B cell (primary cell): ENCODE measurements at regions of chr9 and their contacts with region 1.

Region 1: GRCh38 chr9:128552153-128552743 is at the start of gene SPTAN1:
- DNase-seq: peak; percentile 97
- ATAC-seq: peak; percentile 88
- H3K4me3 ChIP-seq: peak within 1 kb of the TSS; percentile 74 to 90 (median 77)
- H3K4me3 Mint-ChIP-seq: no peak within 1 kb of the TSS
- H3K27ac ChIP-seq: peak within 1 kb of the TSS; percentile 80 to 90
- H3K27ac Mint-ChIP-seq: peak within 1 kb of the TSS; percentile 90
- H3K4me1 ChIP-seq: peaks cover 33 to 34% of the 10 kb centered on the region in 2 donors
- H3K4me1 Mint-ChIP-seq: peaks cover 17% of the 10 kb centered on the region
- H3K27me3 ChIP-seq: no peaks in the 10 kb centered on the region
- H3K27me3 Mint-ChIP-seq: no peaks in the 10 kb centered on the region
- CTCF ChIP-seq: no peak
- total RNA-seq, gene SPTAN1: 351 and 354 TPM in 2 replicates

Region 2: GRCh38 chr9:128191406-128192046 is 360.7 kb before region 1 on chr9 and contains the start of gene CIZ1:
- CTCF ChIA-PET with region 1: no interaction called
- POLR2A ChIA-PET with region 1: no interaction called
- intact Hi-C with region 1: loop called (anchors 10 kb)
- DNase-seq: peak; percentile 88
- ATAC-seq: peak; percentile 90
- H3K4me3 ChIP-seq: peak within 1 kb of the TSS; percentile 26 to 82 (median 73)
- H3K4me3 Mint-ChIP-seq: peak within 1 kb of the TSS; percentile 94
- H3K27ac ChIP-seq: peak within 1 kb of the TSS; percentile 44 to 76
- H3K27ac Mint-ChIP-seq: peak within 1 kb of the TSS; percentile 92
- H3K4me1 ChIP-seq: peaks cover 12 to 24% of the 10 kb centered on the region in 2 donors
- H3K4me1 Mint-ChIP-seq: peaks cover 29% of the 10 kb centered on the region
- H3K27me3 ChIP-seq: no peaks in the 10 kb centered on the region
- H3K27me3 Mint-ChIP-seq: no peaks in the 10 kb centered on the region
- CTCF ChIP-seq: peak; percentile 84
- total RNA-seq, gene CIZ1: 160 and 169 TPM in 2 replicates

Region 3: DNA sequence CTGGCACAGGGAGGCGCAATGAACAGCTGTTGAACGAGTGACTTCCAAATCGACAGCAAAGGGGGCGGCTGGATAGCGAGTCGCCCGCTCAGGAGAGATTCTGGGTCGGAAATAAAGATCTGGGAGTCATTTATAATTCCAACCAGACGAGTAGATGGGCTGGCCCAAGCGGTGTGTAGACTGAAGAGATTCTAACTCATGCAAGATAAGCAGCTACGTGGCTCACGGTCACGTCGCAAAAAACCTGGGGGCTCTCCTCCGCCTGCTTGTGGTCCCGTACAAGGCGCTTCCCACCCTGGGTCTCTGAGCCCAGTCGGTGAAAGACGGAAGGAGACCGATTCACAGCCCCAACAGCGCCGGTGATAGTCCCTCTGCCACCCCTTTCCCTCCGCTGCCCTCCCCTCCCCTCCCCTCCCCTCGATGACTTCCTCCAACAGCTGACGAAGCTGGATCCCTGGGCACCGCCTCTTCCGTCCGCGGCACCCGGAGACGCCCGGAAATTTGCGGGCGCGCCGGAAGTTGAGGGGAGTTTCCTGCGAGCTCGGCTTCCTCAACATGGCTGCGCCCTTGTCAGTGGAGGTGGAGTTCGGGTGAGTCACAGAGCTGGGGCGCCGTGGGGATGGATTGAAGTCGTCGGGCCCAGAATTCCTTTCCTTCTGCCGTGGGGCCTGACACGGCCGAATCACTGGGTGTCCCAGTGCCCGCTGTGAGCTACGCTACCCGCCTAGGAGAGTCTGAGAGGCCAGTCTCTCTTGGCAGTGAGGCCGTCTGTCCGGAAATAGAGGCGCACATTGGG is 181.2 kb before region 1 on chr9 and contains the start of gene URM1:
- CTCF ChIA-PET with region 1: interaction called, 3 read pairs
- POLR2A ChIA-PET with region 1: no interaction called
- intact Hi-C with region 1: loop called (anchors 1 kb)
- DNase-seq: peak; percentile 96
- ATAC-seq: peak; percentile 94
- H3K4me3 ChIP-seq: peak within 1 kb of the TSS; percentile 86 to 98 (median 90)
- H3K4me3 Mint-ChIP-seq: peak within 1 kb of the TSS; percentile 95
- H3K27ac ChIP-seq: peak within 1 kb of the TSS; percentile 83 to 96
- H3K27ac Mint-ChIP-seq: peak within 1 kb of the TSS; percentile 96
- H3K4me1 ChIP-seq: peaks cover 15 to 23% of the 10 kb centered on the region in 2 donors
- H3K4me1 Mint-ChIP-seq: peaks cover 30% of the 10 kb centered on the region
- H3K27me3 ChIP-seq: no peaks in the 10 kb centered on the region
- H3K27me3 Mint-ChIP-seq: no peaks in the 10 kb centered on the region
- CTCF ChIP-seq: no peak
- total RNA-seq, gene URM1: 35.6 and 43.8 TPM in 2 replicates

Region 4: DNA sequence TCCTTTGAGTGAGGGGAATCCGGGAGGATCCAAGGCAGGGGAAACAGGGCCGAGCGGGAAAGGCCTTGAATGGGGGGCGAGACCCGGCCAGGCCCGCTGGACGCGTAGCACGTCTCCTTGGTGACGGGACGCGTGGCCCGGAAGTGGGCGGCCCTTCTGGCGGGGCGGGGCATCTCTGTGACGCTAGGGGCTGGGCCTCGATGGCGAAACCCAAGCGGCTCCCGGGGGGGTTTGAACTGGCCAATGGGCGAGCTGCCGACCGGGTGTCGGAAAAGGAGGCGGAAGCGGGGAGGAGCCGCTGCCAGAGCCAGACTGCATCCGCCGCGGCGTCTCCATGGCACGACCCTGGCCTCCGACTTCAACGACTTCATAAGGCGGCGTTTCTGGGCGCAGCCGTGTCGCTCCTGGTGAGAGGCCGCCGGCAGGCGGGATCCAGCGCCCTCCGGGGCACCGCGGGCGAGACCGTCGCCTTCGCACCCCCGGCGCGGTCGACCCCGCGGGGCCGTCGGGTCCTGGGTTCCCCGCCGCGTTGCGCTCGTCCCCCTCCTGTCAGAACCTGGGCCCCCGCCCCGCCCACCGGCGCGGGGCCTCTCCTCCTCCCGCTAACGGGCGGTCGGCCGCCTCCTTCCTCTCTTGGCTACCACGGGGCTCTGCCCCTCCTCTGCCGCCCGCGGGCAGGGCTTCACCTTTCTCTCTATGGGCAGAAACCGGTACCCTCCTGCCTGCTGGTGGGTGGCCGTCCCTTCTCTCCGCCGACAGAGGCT is 96.2 kb before region 1 on chr9 and contains the start of gene ODF2:
- CTCF ChIA-PET with region 1: no interaction called
- POLR2A ChIA-PET with region 1: no interaction called
- intact Hi-C with region 1: loop called (anchors 1 kb)
- DNase-seq: peak; percentile 98
- ATAC-seq: peak; percentile 85
- H3K4me3 ChIP-seq: peak within 1 kb of the TSS; percentile 23 to 89 (median 81)
- H3K4me3 Mint-ChIP-seq: peak within 1 kb of the TSS; percentile 93
- H3K27ac ChIP-seq: peak within 1 kb of the TSS; percentile 65 to 92
- H3K27ac Mint-ChIP-seq: peak within 1 kb of the TSS; percentile 93
- H3K4me1 ChIP-seq: peaks cover 8 to 13% of the 10 kb centered on the region in 2 donors
- H3K4me1 Mint-ChIP-seq: peaks cover 18% of the 10 kb centered on the region
- H3K27me3 ChIP-seq: no peaks in the 10 kb centered on the region
- H3K27me3 Mint-ChIP-seq: no peaks in the 10 kb centered on the region
- CTCF ChIP-seq: no peak
- total RNA-seq, gene ODF2: 36.6 and 42.9 TPM in 2 replicates

Region 5: GRCh38 chr9:128528445-128529160 is 23.6 kb before region 1 on chr9:
- CTCF ChIA-PET with region 1: no interaction called
- POLR2A ChIA-PET with region 1: no interaction called
- intact Hi-C with region 1: no loop called
- DNase-seq: no peak
- ATAC-seq: no peak
- H3K4me3 ChIP-seq: no peak overlapping the region
- H3K4me3 Mint-ChIP-seq: no peak overlapping the region
- H3K27ac ChIP-seq: no peak overlapping the region
- H3K27ac Mint-ChIP-seq: no peak overlapping the region
- H3K4me1 ChIP-seq: no peaks in the 10 kb centered on the region
- H3K4me1 Mint-ChIP-seq: peaks cover 2% of the 10 kb centered on the region
- H3K27me3 ChIP-seq: no peaks in the 10 kb centered on the region
- H3K27me3 Mint-ChIP-seq: no peaks in the 10 kb centered on the region
- CTCF ChIP-seq: no peak

Region 6: DNA sequence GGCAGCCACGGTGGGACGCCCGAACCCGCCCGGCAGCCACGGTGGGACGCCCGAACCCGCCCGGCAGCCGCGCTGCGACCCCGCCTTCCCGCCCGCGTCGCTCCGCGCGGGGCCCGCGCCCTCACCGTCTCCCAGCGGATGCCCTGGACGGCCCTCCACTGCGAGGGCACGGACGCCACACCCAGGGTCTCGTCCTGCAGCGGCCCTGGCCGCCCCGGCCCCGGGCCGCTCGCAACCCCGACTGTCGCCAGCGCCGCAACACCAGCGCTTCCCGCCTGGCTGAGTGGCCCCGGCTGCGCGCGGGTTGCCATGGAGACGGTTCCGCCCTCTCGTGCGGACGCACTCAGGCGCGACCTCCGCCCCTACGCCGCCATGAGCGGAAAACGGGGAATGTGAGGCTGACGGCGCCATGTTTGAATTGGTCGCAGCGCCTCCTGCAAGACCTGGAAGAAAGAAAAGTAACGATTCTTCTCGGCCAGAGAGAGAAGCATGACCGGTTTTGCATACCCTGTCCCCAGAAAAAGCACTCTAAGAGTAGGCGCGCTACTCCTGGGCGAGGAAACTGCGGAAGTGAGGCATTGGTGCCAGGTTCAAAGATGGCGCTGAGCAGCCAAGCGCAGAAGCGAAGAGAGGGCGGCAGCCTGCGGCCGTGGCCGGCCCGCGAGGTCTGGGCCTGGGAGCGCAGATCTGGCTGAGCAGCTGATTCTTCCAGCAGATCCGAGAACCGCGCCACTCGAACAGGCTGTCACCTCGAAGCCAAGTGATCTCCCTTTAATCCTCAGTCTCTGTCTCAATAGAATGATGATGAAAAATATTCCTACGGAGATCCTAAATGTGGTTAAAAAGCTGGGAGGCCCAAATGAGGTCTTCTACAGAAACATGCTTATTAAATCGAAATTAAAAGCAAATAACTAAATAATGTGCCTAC is 104.4 kb after region 1 on chr9 and contains the start of gene DYNC2I2:
- CTCF ChIA-PET with region 1: no interaction called
- POLR2A ChIA-PET with region 1: no interaction called
- intact Hi-C with region 1: loop called (anchors 1 kb)
- DNase-seq: peak; percentile 90
- ATAC-seq: peak; percentile 80
- H3K4me3 ChIP-seq: peak within 1 kb of the TSS; percentile 66 to 97 (median 89)
- H3K4me3 Mint-ChIP-seq: peak within 1 kb of the TSS; percentile 96
- H3K27ac ChIP-seq: peak within 1 kb of the TSS; percentile 92 to 95
- H3K27ac Mint-ChIP-seq: peak within 1 kb of the TSS; percentile 100
- H3K4me1 ChIP-seq: peaks cover 2 to 14% of the 10 kb centered on the region in 2 donors
- H3K4me1 Mint-ChIP-seq: peaks cover 13% of the 10 kb centered on the region
- H3K27me3 ChIP-seq: no peaks in the 10 kb centered on the region
- H3K27me3 Mint-ChIP-seq: no peaks in the 10 kb centered on the region
- CTCF ChIP-seq: no peak
- total RNA-seq, gene DYNC2I2: 76.6 and 83.4 TPM in 2 replicates

Region 7: GRCh38 chr9:128723866-128724743 is 171.9 kb after region 1 on chr9 and contains the start of gene ZDHHC12:
- CTCF ChIA-PET with region 1: no interaction called
- POLR2A ChIA-PET with region 1: interaction called, 3 read pairs
- intact Hi-C with region 1: loop called (anchors 1 kb)
- DNase-seq: peak; percentile 99
- ATAC-seq: peak; percentile 97
- H3K4me3 ChIP-seq: peak within 1 kb of the TSS; percentile 62 to 96 (median 92)
- H3K4me3 Mint-ChIP-seq: peak within 1 kb of the TSS; percentile 97
- H3K27ac ChIP-seq: peak within 1 kb of the TSS; percentile 66 to 82
- H3K27ac Mint-ChIP-seq: peak within 1 kb of the TSS; percentile 91
- H3K4me1 ChIP-seq: peaks cover 18 to 23% of the 10 kb centered on the region in 2 donors
- H3K4me1 Mint-ChIP-seq: peaks cover 31% of the 10 kb centered on the region
- H3K27me3 ChIP-seq: no peaks in the 10 kb centered on the region
- H3K27me3 Mint-ChIP-seq: no peaks in the 10 kb centered on the region
- CTCF ChIP-seq: no peak
- total RNA-seq, gene ZDHHC12: 25.3 and 28.5 TPM in 2 replicates